MCF 10A (cell line): ENCODE measurements at regions of chr10 and their contacts with region 1.

Region 1: GRCh38 chr10:3785257-3785850 is 345 bp upstream of the KLF6 start:
- DNase-seq: peak; percentile 98
- H3K4me3 Mint-ChIP-seq: peak overlapping the region; percentile 96
- H3K27ac Mint-ChIP-seq: peak overlapping the region; percentile 100
- H3K4me1 Mint-ChIP-seq: peaks cover 17% of the 10 kb centered on the region
- H3K27me3 Mint-ChIP-seq: no peaks in the 10 kb centered on the region
- CTCF ChIP-seq: no peak

Region 2: DNA sequence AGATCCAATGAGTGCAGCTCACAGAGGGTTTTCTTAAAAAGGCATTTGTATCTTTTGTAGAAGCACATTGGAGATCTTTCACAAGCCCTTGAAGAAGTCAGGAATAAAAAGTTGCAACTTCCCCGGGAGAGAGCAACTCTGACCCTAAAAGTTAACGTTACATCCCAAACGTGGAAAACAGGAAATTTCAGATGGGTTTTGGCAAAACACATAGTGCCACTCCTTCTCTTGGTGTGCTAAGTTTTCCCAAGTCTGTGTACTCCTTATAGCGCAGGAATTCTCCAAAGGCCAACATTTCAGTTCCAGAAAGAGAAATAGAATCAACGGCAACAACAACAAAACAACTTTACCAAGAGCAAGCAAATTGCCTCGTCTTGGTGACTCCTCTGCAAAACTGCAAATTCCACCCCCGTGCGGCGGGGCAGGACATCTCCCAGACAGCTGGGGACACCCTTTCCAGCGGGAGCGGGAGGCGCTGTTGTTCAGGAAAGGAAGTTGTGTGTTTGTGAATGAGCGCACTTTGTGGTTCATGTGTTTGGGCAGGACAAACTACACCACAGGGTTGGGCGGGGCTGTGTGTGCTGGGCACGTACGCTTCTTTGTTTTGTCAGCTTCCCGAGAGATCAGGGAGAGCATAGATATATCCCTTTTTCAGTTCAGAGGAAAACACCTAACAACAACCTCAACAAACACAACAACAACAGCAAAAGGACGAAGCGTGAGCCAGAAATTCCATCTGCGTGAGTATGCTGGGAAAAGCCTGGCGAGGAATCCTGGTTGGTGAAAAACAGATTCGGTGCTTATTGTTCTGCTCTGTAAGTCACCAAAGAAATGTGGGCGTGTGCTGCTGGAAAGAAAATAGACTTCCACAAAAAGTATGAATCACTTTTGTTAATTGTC is 318.1 kb before region 1 on chr10:
- CTCF ChIA-PET with region 1: interaction called, 3 read pairs
- POLR2A ChIA-PET with region 1: interaction called, 85 read pairs
- intact Hi-C with region 1: no loop called
- DNase-seq: peak; percentile 97
- H3K4me3 Mint-ChIP-seq: peak overlapping the region; percentile 79
- H3K27ac Mint-ChIP-seq: peak overlapping the region; percentile 100
- H3K4me1 Mint-ChIP-seq: peaks cover 46% of the 10 kb centered on the region
- H3K27me3 Mint-ChIP-seq: no peaks in the 10 kb centered on the region
- CTCF ChIP-seq: peak; percentile 55

Region 3: DNA sequence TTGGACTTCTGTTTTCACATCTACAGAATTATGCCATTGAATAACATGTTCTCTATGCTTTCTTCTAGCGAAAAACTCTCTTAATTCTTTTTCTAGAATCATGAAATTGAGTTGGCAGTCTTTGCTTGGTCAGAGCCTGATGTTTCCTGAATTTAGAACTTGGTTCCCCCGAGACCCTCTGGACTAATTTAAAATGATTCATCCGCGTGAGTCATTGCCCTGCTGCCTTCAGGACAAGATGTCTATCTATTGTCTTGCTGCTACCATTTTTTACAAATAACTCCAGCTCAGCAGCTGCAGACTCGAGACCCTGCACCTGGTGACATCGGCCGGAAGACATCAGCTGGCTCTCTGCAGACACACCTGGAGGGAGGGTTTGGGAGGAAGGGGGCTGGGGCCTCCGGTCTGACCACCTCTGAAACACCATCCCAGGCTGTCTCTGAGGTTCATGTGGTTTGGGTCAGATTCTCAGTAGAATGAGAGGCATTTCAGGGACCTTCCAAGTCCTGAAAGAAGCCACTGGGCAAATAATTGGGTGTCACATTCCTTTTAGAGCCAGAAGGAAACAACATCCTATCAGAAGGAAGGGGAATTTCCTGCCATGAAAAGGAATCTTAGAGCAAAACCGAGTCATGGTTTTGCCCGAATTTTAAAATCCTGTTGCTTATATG is 20.6 kb after region 1 on chr10:
- CTCF ChIA-PET with region 1: interaction called, 5 read pairs
- POLR2A ChIA-PET with region 1: interaction called, 571 read pairs
- intact Hi-C with region 1: loop called (anchors 1 kb)
- DNase-seq: peak; percentile 73
- H3K4me3 Mint-ChIP-seq: peak overlapping the region; percentile 23
- H3K27ac Mint-ChIP-seq: peak overlapping the region; percentile 100
- H3K4me1 Mint-ChIP-seq: peaks cover 47% of the 10 kb centered on the region
- H3K27me3 Mint-ChIP-seq: no peaks in the 10 kb centered on the region
- CTCF ChIP-seq: no peak

Region 4: DNA sequence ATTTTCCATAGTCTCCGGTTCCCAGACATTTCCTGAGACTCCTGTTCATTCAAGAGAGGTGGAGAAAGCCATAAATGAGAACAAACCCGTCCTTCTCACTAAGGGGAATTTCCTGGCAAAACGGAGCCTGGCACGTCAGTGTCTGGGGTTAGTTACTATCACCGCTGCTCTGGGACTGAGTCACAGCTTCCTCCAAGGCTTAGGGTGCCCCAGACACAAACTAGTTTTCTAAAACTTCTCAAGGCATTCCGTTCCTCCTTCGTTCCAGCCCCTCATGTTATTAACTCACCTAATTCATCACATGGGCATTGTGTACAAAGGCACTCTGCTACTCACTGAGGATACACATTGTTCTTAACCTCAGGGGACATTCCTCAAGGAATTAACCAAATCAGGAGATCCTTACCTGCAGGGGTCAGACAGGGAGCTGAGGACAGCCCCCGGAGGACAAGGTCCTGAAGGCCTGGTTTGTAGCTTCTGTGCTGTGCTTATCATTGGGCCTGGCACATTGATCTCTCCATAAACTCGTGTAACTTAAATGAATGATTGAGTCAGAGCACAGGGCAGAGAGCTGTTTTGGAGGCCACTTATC is 102.6 kb after region 1 on chr10:
- CTCF ChIA-PET with region 1: no interaction called
- POLR2A ChIA-PET with region 1: interaction called, 27 read pairs
- intact Hi-C with region 1: no loop called
- DNase-seq: peak; percentile 77
- H3K4me3 Mint-ChIP-seq: no peak overlapping the region
- H3K27ac Mint-ChIP-seq: peak overlapping the region; percentile 81
- H3K4me1 Mint-ChIP-seq: peaks cover 32% of the 10 kb centered on the region
- H3K27me3 Mint-ChIP-seq: no peaks in the 10 kb centered on the region
- CTCF ChIP-seq: no peak

Region 5: DNA sequence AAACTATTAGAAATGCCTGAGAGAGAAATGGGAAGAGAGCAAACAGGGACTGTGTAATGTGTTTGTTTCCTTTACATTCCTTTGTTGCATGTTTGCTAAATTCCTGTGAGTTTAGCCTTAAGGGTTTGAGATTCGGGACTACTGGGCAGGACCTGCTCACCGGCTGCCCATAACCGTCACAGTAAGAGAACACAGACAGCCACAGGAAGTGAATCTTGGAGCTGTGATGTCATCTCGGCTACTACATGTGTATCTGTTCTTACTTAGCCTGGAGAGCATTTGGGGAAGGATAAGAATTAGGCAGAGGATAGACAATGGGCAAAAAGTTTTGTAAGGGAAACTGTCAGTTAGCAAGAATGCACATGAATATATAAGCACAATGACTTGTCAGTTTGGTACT is 484.8 kb after region 1 on chr10:
- CTCF ChIA-PET with region 1: interaction called, 4 read pairs
- POLR2A ChIA-PET with region 1: interaction called, 59 read pairs
- intact Hi-C with region 1: loop called (anchors 1 kb)
- DNase-seq: peak; percentile 47
- H3K4me3 Mint-ChIP-seq: no peak overlapping the region
- H3K27ac Mint-ChIP-seq: peak overlapping the region; percentile 54
- H3K4me1 Mint-ChIP-seq: peaks cover 34% of the 10 kb centered on the region
- H3K27me3 Mint-ChIP-seq: no peaks in the 10 kb centered on the region
- CTCF ChIP-seq: no peak

Region 6: GRCh38 chr10:4656576-4657182 is 871.3 kb after region 1 on chr10:
- CTCF ChIA-PET with region 1: interaction called, 3 read pairs
- POLR2A ChIA-PET with region 1: interaction called, 69 read pairs
- intact Hi-C with region 1: no loop called
- DNase-seq: peak; percentile 76
- H3K4me3 Mint-ChIP-seq: no peak overlapping the region
- H3K27ac Mint-ChIP-seq: peak overlapping the region; percentile 35
- H3K4me1 Mint-ChIP-seq: peaks cover 12% of the 10 kb centered on the region
- H3K27me3 Mint-ChIP-seq: no peaks in the 10 kb centered on the region
- CTCF ChIP-seq: peak; percentile 90

Region 7: GRCh38 chr10:4767033-4767814 is 981.9 kb after region 1 on chr10:
- CTCF ChIA-PET with region 1: interaction called, 3 read pairs
- POLR2A ChIA-PET with region 1: interaction called, 78 read pairs
- intact Hi-C with region 1: loop called (anchors 2 kb)
- DNase-seq: peak; percentile 57
- H3K4me3 Mint-ChIP-seq: no peak overlapping the region
- H3K27ac Mint-ChIP-seq: peak overlapping the region; percentile 76
- H3K4me1 Mint-ChIP-seq: peaks cover 31% of the 10 kb centered on the region
- H3K27me3 Mint-ChIP-seq: no peaks in the 10 kb centered on the region
- CTCF ChIP-seq: peak; percentile 78